Dorsolateral prefrontal cortex (tissue), 120 donors: ENCODE measurements at regions of chr6 and their contacts with region 1.

Region 1: GRCh38 chr6:35688581-35689322 is at the start of gene FKBP5:
- DNase-seq: peak; percentile 63 to 96 (median 94)
- H3K4me3 ChIP-seq: peak within 1 kb of the TSS; percentile 66 to 98 (median 84)
- H3K27ac ChIP-seq: peak within 1 kb of the TSS; percentile 23 to 97 (median 86)
- H3K27me3 ChIP-seq: no peaks in the 10 kb centered on the region
- CTCF ChIP-seq: peak in 11 of 56 donors; percentile 8 to 38 (median 16)
- total RNA-seq, gene FKBP5: 12.0 to 124 (median 62.9) TPM

Region 2: DNA sequence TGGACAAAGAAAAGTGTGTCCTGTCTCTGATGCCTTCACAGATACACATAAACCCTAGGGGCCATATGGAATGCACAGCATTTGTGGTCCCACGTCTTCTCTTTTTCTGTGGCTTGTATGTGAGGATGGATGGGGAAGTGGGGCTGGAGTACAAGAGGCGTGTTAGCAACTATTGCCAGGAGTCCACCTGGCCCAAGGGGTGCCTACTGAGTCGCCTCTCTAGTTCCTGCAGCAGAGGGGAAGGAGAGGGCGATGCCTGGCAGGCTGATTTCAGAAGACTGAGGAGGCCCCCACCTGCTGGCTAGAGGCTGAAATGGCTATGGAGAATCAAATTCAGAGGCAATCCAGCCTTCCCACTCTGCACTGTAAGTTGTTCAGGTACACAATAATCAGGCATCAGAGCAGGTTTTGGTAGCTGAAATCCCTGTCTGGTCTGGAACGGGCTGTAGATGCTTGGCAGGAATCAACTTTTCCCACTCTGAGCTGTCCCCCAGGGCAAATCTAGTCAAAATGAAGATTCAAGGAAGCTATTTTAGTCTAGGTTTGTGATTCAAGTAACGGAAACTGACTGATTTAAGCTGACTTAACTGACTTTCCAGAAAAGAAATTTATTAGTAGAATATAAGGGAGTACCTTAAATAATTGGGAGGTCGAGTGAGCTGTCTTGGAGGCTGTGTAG is 361.3 kb before region 1 on chr6:
- intact Hi-C with region 1: no loop called
- DNase-seq: peak in 4 of 10 donors; percentile 52 to 55 (median 52)
- H3K4me3 ChIP-seq: no peak overlapping the region
- H3K27ac ChIP-seq: no peak overlapping the region
- H3K27me3 ChIP-seq: peaks cover 0 to 6% (median 0%) of the 10 kb centered on the region in 45 donors
- CTCF ChIP-seq: peak in 47 of 56 donors; percentile 20 to 66 (median 38)

Region 3: GRCh38 chr6:35583893-35584688 is 104.7 kb before region 1 on chr6:
- intact Hi-C with region 1: loop called in 1 of 2 experiments (anchors 5 kb)
- DNase-seq: peak in 7 of 10 donors; percentile 43 to 81 (median 66)
- H3K4me3 ChIP-seq: no peak overlapping the region
- H3K27ac ChIP-seq: peak overlapping the region in 42 of 59 donors; percentile 0 to 78 (median 42)
- H3K27me3 ChIP-seq: no peaks in the 10 kb centered on the region
- CTCF ChIP-seq: peak; percentile 67 to 98 (median 89)

Region 4: GRCh38 chr6:35601331-35602132 is 87.2 kb before region 1 on chr6:
- intact Hi-C with region 1: loop called in 1 of 2 experiments (anchors 5 kb)
- DNase-seq: peak in 3 of 10 donors; percentile 36 to 57 (median 40)
- H3K4me3 ChIP-seq: peak overlapping the region in 54 of 59 donors; percentile 0 to 56 (median 34)
- H3K27ac ChIP-seq: peak overlapping the region; percentile 71 to 100 (median 98)
- H3K27me3 ChIP-seq: no peaks in the 10 kb centered on the region
- CTCF ChIP-seq: peak in 7 of 56 donors; percentile 6 to 38 (median 14)